Activated T-helper 1 cell treated with anti-CD3 and anti-CD28 coated beads, Interleukin-12 subunit alpha, Interleukin-12 subunit beta, Interleukin-2, Interleukin-4 antibody, amounts not matched to agents 30 ng/mL and 10 ng/mL and 1 ng/mL, durations not matched to agents 14 hours and 24 hours and 36 hours (primary cell): ENCODE measurements at regions of chr16 and their contacts with region 1.

Region 1: DNA sequence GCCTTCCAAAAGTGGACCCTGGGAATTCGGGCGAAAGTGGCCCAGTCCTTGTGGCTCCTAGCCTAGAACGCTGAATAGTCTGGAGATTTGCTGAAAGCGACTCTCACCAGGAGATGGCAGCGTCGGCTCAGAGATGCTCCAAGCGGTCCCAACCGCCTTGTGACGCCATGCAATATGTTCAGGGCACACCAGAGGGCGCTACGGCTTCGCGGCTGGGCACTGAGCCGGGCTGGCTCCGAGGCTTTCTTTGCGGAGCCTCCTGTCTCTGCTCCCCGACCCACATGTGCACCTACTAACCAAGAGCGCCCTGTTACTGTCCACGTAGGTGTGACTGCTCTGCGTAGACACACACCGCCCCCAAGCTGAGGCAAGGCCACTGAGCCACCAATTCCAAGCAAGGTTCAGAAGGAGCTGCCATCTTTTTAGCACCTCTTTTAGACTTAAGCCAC is 36.9 kb downstream of the SYCE1L start:
- DNase-seq: peak; percentile 79
- H3K4me3 Mint-ChIP-seq: peak overlapping the region; percentile 20
- H3K27ac Mint-ChIP-seq: no peak overlapping the region
- H3K4me1 Mint-ChIP-seq: peaks cover 6% of the 10 kb centered on the region
- H3K27me3 Mint-ChIP-seq: peaks cover 13% of the 10 kb centered on the region

Region 2: DNA sequence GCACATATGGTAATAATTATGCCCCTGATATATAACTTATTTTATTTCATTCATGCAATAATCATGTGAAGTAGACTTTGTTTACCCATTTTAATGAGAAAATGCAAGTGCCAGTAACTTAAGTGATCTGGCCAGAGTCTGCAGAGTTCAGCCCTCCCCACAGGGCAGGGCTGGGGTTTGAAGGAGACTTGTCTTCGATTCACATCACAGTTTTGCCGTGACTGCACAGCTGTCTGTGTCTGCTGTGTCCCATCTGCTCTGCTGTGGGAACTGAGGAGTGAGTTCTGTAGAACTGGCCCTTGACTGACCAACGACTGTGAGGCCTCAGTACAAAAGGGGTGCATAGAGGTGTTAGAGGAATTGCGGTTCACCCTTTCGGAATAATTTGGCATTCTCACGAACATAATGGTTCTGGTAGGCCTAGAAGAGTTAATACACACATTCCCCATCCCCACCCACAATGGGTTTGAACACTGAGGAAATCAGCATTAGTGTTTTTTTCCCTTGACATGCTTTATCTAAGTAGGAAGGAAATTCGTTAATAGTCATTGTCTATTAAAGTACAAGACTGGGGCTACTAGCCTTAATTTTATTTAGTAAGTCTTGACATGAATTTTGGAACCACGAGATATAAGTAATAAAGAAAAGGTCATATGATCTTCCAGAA is 158.7 kb before region 1 on chr16:
- intact Hi-C with region 1: no loop called
- DNase-seq: no peak
- H3K4me3 Mint-ChIP-seq: no peak overlapping the region
- H3K27ac Mint-ChIP-seq: no peak overlapping the region
- H3K4me1 Mint-ChIP-seq: no peaks in the 10 kb centered on the region
- H3K27me3 Mint-ChIP-seq: no peaks in the 10 kb centered on the region

Region 3: DNA sequence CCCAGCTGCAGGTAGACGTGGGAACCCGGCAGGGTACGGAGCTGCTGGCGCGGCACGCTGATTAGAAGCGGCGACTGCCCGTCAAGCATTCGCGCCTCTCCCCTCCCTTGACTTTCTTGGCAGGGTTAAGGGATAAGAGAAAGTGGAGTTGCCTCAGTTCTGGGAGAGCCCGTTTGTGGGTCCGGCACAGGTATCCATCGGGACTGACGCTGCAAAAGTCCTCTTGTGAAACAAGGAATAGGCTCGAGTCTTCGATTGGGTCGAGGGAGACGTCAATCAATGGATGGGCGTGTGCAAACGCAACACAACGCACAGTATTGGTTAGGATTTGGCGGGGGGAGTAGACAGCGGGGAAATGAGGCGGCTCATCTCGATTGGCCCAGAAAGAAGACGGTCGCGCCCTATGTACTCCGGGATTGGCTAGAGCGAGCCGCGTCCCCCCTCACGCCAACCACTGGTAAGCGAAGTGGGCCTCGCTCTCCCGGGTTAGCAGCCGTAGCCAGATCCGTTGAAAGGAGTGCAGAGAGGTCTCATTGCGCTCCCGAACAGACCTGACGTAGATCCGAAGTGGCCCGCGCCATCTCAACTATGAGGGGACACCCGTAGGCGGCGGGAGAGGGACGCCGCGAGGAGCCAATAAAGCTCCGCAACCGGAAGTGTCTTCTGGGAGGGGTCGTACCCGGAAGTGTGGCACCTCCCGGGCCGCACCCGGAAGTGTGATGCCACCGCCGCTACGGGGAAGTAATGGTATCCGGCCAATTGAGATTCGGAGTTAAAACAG is 45.4 kb before region 1 on chr16 and contains the start of gene MON1B:
- intact Hi-C with region 1: loop called (anchors 2 kb)
- DNase-seq: peak; percentile 93
- H3K4me3 Mint-ChIP-seq: peak within 1 kb of the TSS; percentile 97
- H3K27ac Mint-ChIP-seq: peak within 1 kb of the TSS; percentile 100
- H3K4me1 Mint-ChIP-seq: peaks cover 39% of the 10 kb centered on the region
- H3K27me3 Mint-ChIP-seq: peaks cover 4% of the 10 kb centered on the region
- total RNA-seq, gene MON1B: 66.2 and 70.1 TPM in 2 replicates

Region 4: GRCh38 chr16:77376358-77376757 is 140.3 kb after region 1 on chr16:
- intact Hi-C with region 1: loop called (anchors 1 kb)
- DNase-seq: no peak
- H3K4me3 Mint-ChIP-seq: no peak overlapping the region
- H3K27ac Mint-ChIP-seq: no peak overlapping the region
- H3K4me1 Mint-ChIP-seq: no peaks in the 10 kb centered on the region
- H3K27me3 Mint-ChIP-seq: peaks cover 3% of the 10 kb centered on the region

Region 5: GRCh38 chr16:77406677-77407076 is 170.6 kb after region 1 on chr16:
- intact Hi-C with region 1: no loop called
- DNase-seq: no peak
- H3K4me3 Mint-ChIP-seq: no peak overlapping the region
- H3K27ac Mint-ChIP-seq: no peak overlapping the region
- H3K4me1 Mint-ChIP-seq: no peaks in the 10 kb centered on the region
- H3K27me3 Mint-ChIP-seq: peaks cover 9% of the 10 kb centered on the region

Region 6: DNA sequence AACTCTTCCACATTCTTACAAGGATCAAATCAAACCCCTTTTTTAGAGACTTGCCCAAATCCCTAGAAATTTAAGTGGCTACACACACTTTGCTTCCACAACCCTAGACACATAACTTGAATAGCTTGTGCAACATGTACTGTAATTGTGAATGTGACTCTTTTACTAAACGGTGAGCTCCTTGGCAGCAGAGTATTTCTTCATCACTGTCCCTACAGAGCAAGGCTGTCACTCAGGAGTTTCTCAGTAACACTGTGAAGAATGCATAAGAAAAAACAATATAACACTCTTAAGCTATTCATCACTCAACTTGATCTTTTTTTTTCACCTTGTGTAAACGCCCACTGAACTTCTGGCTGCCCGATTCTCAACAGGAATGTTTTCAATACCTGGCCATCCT is 252.6 kb after region 1 on chr16:
- intact Hi-C with region 1: no loop called
- DNase-seq: no peak
- H3K4me3 Mint-ChIP-seq: no peak overlapping the region
- H3K27ac Mint-ChIP-seq: no peak overlapping the region
- H3K4me1 Mint-ChIP-seq: no peaks in the 10 kb centered on the region
- H3K27me3 Mint-ChIP-seq: no peaks in the 10 kb centered on the region

Region 7: DNA sequence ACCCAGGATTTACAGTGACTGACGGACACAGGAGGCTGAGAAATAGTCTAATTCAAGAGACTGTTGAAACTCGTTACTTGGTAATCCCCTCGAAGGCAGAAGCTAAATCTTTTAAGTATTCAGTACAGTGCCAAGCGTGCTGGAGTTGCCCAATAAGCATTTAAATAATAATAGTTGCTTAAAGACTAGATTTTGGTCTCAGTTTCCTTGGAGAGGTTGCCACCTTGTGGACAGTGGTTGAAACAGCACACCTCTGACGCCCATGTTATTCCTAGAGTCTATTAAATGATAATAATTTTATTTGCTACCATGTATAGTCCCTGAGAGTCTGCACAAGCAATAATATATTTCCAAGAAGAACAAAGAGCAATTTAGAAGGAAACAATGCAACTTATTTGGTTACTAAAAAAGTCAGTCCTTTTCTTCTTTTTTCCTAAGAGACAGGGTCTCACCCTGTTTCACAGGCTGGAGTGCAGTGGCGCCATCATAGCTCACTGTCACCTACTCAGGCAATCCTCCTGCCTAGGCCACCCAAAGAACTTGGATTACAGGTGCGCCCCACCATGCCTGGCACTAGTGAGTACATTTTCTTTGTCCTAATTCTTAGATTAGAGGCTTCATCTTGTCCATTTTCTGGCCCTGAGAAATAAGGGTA is 348.2 kb after region 1 on chr16:
- intact Hi-C with region 1: loop called (anchors 1 kb)
- DNase-seq: peak; percentile 2
- H3K4me3 Mint-ChIP-seq: no peak overlapping the region
- H3K27ac Mint-ChIP-seq: no peak overlapping the region
- H3K4me1 Mint-ChIP-seq: peaks cover 7% of the 10 kb centered on the region
- H3K27me3 Mint-ChIP-seq: peaks cover 8% of the 10 kb centered on the region

Region 8: GRCh38 chr16:77971306-77972271 is 735.5 kb after region 1 on chr16:
- intact Hi-C with region 1: loop called (anchors 1 kb)
- DNase-seq: peak; percentile 51
- H3K4me3 Mint-ChIP-seq: no peak overlapping the region
- H3K27ac Mint-ChIP-seq: no peak overlapping the region
- H3K4me1 Mint-ChIP-seq: no peaks in the 10 kb centered on the region
- H3K27me3 Mint-ChIP-seq: peaks cover 8% of the 10 kb centered on the region